A549 (cell line): ENCODE measurements at regions of chr1 and their contacts with region 1.

Region 1: GRCh38 chr1:27102707-27103491 is 52.0 kb downstream of the SLC9A1 start:
- DNase-seq: peak; percentile 47 to 74
- ATAC-seq: peak; percentile 67 to 84; a peak in 5 of 6 replicates
- H3K4me3 ChIP-seq: no peak overlapping the region
- H3K27ac ChIP-seq: 0 out of 6 replicates have a peak overlapping the region, but pooled peaks of 1 of the 2 experiments have one; percentile 30
- H3K4me1 ChIP-seq: peaks cover 33% of the 10 kb centered on the region
- CTCF ChIP-seq: peak; percentile 81
- EP300 ChIP-seq: no peak
- POLR2A ChIP-seq: no peak
- RAD21 ChIP-seq: peak; percentile 93 to 94

Region 2: DNA sequence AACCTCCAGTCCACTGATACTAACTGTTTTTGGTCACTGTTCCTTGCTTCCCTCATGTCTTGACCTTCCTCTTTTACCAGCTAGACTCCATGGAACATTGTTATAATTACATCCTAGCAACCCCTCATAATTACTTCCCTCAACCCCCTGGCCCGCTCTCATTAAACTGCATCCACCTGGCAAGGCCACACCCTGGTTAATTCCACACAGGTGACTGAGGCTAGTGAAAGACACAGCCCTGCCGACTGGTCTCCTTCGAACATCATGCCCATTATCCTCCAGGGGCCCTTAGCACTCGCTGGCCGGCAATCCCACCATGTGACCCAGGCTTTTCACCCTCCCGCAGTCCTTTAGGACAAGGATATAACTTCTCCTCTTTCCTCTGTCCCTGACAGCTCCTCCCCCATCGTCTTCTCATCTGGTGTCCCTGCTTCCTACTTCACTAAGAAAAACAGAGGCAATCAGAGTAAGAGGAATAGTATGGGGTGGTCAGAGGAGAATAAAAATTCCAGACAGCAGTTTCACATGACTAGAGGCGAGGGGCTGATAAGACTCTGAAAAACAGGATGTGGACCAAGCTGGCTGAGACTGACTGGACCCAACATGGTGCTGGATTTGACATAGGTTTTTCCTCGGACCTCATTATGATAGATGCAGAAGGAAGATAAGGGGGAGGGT is 81.4 kb before region 1 on chr1:
- CTCF ChIA-PET with region 1: no interaction called
- POLR2A ChIA-PET with region 1: no interaction called
- DNase-seq: no peak
- ATAC-seq: no peak
- H3K4me3 ChIP-seq: no peak overlapping the region
- H3K27ac ChIP-seq: no peak overlapping the region
- H3K4me1 ChIP-seq: no peaks in the 10 kb centered on the region
- CTCF ChIP-seq: no peak
- EP300 ChIP-seq: no peak
- POLR2A ChIP-seq: no peak
- RAD21 ChIP-seq: no peak

Region 3: DNA sequence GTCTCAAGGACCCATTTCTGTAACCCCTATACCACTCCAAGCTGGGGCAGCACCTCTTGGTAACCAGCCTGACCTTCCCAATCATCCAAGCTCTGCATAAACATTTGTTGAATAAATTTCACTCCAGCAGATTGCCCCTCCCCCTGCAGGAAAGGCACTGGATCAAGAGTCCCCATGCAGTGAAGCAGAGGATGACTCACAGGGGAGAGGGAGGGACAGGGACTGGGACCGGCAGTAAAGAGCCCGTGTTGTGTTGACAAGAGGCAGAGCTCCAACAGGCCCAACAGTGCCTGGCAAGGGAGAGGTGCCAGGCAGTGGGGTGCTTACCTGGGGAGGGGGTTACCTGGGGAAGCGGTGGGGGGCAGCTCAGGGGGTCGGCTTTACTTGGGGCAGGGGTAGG is 19.8 kb after region 1 on chr1:
- CTCF ChIA-PET with region 1: interaction called, 18 read pairs
- POLR2A ChIA-PET with region 1: no interaction called
- DNase-seq: peak; percentile 61 to 77
- ATAC-seq: peak; percentile 85 to 89
- H3K4me3 ChIP-seq: no peak overlapping the region
- H3K27ac ChIP-seq: peak overlapping the region; percentile 41 to 83; a peak in 5 of 6 replicates
- H3K4me1 ChIP-seq: peaks cover 23% of the 10 kb centered on the region
- CTCF ChIP-seq: no peak
- EP300 ChIP-seq: no peak
- POLR2A ChIP-seq: no peak
- RAD21 ChIP-seq: no peak

Region 4: DNA sequence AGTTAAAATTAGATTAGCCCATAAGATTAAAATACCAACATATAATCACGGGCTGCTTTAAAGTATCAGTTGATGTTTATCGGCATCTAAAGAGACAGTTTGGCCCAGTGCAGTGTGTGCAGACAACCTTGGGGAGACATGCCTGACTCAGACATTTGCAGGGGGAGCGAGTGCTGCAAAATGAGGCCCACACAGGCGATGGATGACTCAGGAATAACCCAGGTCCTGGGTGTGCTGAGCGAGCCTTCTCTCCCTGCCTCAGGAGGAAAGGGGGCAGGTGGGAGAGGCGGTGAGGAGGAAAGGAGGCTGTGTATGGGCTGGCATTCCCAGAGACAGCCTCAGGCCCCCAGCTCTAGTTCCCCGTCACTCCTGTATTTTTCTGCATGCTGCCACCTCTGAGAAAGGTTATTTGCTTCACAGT is 43.0 kb after region 1 on chr1:
- CTCF ChIA-PET with region 1: interaction called, 23 read pairs
- POLR2A ChIA-PET with region 1: no interaction called
- DNase-seq: peak; percentile 48 to 55
- ATAC-seq: peak; percentile 87 to 90
- H3K4me3 ChIP-seq: no peak overlapping the region
- H3K27ac ChIP-seq: peak overlapping the region; percentile 84 to 86
- H3K4me1 ChIP-seq: peaks cover 36% of the 10 kb centered on the region
- CTCF ChIP-seq: no peak
- EP300 ChIP-seq: no peak
- POLR2A ChIP-seq: no peak
- RAD21 ChIP-seq: no peak